Activated CD4-positive, alpha-beta T cell treated with anti-CD3 and anti-CD28 coated beads, Interleukin-2, amount 10 ng/mL, durations not matched to agents 24 days and 14 days (primary cell): ENCODE measurements at regions of chr10 and their contacts with region 1.

Region 1: GRCh38 chr10:14604181-14605142 is 170.2 kb downstream of the FAM107B start:
- DNase-seq: peak; percentile 92
- H3K4me3 Mint-ChIP-seq: peak overlapping the region; percentile 88
- H3K27ac Mint-ChIP-seq: peak overlapping the region; percentile 97
- H3K4me1 Mint-ChIP-seq: peaks cover 76% of the 10 kb centered on the region
- H3K27me3 Mint-ChIP-seq: no peaks in the 10 kb centered on the region

Region 2: DNA sequence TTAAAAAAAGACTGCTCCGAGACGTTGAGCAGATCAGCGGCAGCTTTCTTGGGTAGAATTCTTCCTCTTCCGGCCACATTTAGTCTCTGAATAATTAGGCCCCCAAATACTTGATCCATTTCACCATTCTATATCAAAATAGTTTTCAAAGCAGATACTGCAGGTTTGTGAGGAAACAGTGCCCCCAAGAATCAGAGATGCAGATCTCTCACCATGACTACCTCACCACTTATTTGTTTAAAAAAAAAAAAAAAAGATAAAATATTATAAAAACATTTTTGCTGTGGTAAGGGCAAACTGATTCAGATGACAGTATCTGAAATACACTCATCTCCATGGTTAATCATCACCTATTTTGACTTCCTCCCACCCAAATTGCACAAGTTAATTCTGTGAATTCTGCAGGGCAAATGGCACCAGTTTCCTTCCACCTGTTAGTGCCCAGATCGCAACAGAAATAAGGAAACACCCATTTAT is 40.2 kb before region 1 on chr10:
- intact Hi-C with region 1: loop called (anchors 1 kb)
- DNase-seq: peak; percentile 72
- H3K4me3 Mint-ChIP-seq: peak overlapping the region; percentile 83
- H3K27ac Mint-ChIP-seq: peak overlapping the region; percentile 97
- H3K4me1 Mint-ChIP-seq: peaks cover 80% of the 10 kb centered on the region
- H3K27me3 Mint-ChIP-seq: no peaks in the 10 kb centered on the region

Region 3: DNA sequence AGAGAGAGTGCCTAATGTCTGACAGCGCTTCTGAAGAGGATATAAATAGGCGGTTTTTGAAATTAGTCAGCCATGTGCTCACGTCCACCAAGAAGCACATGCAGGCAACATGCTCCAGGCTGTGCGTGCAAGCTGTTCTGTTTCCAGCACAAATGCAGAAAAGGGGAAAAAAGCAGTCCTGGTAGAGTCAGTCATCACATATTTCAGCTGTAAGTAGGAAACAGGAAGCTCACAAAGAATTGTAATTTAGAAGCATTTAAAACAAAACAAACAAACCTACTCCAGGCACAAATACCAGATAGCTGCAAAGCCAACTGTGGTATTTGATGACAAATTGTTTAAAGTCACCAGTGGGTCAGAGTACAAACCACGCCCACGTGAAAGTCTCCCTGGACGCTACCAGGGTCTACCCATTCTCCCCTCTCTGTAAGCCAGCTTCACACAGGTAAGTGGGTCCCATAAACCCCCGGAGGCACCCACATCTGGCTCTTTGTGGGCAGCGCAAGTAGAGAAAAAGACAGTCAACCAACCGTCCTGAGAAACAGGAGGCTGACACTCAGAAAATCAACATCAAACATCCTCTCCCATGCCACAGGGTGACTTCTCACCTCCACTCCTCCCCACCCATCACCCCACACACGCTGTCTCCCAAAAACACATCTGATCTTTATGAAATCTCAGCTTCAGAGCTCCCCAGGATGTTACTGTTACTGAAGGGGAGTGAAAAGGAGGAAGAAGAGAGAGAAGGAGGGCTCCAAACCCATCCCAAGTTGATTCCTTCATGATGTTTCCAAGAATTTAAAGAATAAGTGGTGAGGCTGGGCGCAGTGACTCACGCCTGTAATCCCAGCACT is 16.2 kb before region 1 on chr10:
- intact Hi-C with region 1: loop called (anchors 1 kb)
- DNase-seq: peak; percentile 87
- H3K4me3 Mint-ChIP-seq: peak overlapping the region; percentile 84
- H3K27ac Mint-ChIP-seq: peak overlapping the region; percentile 97
- H3K4me1 Mint-ChIP-seq: peaks cover 75% of the 10 kb centered on the region
- H3K27me3 Mint-ChIP-seq: no peaks in the 10 kb centered on the region

Region 4: GRCh38 chr10:14659626-14660196 is 55.2 kb after region 1 on chr10:
- intact Hi-C with region 1: loop called (anchors 1 kb)
- DNase-seq: peak; percentile 89
- H3K4me3 Mint-ChIP-seq: peak overlapping the region; percentile 64
- H3K27ac Mint-ChIP-seq: peak overlapping the region; percentile 92
- H3K4me1 Mint-ChIP-seq: peaks cover 60% of the 10 kb centered on the region
- H3K27me3 Mint-ChIP-seq: no peaks in the 10 kb centered on the region

Region 5: DNA sequence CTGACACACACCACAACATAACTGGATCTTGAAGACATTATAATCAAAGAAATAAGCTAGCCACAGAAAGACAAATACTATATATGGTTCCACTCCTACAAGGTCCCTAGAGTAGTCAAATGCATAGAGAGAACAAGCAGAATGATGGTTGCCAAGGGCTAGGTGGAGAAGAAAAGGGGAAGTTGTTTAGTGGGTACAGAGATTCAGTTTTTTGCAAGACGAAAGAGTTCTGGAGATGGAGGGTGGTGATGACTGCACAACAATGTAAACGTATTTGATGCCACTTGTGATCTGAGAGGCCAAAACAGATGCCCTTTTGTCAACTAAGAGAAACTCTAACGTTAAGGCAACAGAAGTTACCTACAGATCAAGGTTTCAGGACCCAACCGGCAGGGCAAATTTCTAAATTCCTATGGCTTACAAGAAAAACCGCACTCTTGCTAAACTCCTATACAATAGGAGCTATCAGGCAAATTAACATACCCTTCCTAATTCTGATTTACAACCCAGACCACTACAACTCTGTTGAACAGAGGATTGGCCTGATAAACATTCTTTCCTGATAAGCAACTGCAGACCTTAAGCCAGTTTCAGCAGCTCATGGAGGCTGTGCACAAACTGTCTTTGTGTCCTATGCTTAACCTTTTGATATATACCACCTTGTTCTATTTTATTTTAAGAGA is 101.2 kb after region 1 on chr10:
- intact Hi-C with region 1: no loop called
- DNase-seq: no peak
- H3K4me3 Mint-ChIP-seq: no peak overlapping the region
- H3K27ac Mint-ChIP-seq: no peak overlapping the region
- H3K4me1 Mint-ChIP-seq: peaks cover 4% of the 10 kb centered on the region
- H3K27me3 Mint-ChIP-seq: no peaks in the 10 kb centered on the region

Region 6: GRCh38 chr10:14822879-14823755 is 218.7 kb after region 1 on chr10:
- intact Hi-C with region 1: loop called (anchors 2 kb)
- DNase-seq: peak; percentile 79
- H3K4me3 Mint-ChIP-seq: no peak overlapping the region
- H3K27ac Mint-ChIP-seq: no peak overlapping the region
- H3K4me1 Mint-ChIP-seq: peaks cover 12% of the 10 kb centered on the region
- H3K27me3 Mint-ChIP-seq: peaks cover 12% of the 10 kb centered on the region

Region 7: DNA sequence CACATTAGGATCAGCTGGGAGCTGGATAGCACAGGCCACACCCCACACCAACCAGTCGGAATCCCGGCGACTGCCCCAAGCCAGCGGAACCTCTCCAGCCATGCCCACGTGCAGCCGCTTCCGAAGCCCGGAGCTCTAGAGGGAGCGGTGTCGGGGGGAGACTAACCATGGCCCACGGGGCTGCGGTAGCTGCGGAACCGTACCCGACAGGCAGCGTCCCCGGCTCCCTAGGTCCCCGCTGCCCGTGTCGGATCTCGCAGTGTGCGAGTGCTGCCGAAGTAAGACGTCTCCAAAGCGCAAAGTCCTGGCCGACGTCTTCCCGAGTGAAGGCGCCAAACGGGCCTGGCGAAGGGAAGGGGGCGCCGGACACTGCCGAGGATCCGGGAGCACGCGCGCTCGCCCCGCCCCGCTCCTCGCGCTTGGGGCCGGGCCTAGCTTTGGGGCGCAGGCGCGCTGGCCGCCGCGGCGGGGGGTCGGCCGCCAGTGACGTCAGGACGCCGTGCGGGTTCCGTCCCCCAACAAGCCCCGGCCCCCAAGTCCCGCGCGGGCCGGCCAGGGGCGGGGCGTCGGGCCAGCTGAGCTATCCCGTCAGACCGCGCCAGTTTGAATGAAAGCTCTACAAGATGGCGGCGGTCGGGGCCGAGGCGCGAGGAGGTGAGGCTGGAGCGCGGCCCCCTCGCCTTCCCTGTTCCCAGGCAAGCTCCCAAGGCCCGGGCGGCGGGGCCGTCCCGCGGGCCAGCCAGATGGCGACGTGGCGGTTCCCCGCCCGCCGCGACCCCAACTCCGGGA is 274.0 kb after region 1 on chr10 and contains the start of gene SUV39H2:
- intact Hi-C with region 1: loop called (anchors 1 kb)
- DNase-seq: peak; percentile 99
- H3K4me3 Mint-ChIP-seq: peak within 1 kb of the TSS; percentile 96
- H3K27ac Mint-ChIP-seq: peak within 1 kb of the TSS; percentile 92
- H3K4me1 Mint-ChIP-seq: peaks cover 30% of the 10 kb centered on the region
- H3K27me3 Mint-ChIP-seq: no peaks in the 10 kb centered on the region
- total RNA-seq, gene SUV39H2: 46.7 and 47.5 TPM in 2 replicates

Region 8: GRCh38 chr10:15043674-15044073 is 439.2 kb after region 1 on chr10 and contains the start of gene OLAH:
- intact Hi-C with region 1: no loop called
- DNase-seq: no peak
- H3K4me3 Mint-ChIP-seq: peak within 1 kb of the TSS; percentile 6
- H3K27ac Mint-ChIP-seq: peak within 1 kb of the TSS; percentile 59
- H3K4me1 Mint-ChIP-seq: peaks cover 17% of the 10 kb centered on the region
- H3K27me3 Mint-ChIP-seq: no peaks in the 10 kb centered on the region
- total RNA-seq, gene OLAH: 0.26 and 0.62 TPM in 2 replicates